CD4-positive, alpha-beta T cell (primary cell): ENCODE measurements at regions of chr1 and their contacts with region 1.

Region 1: DNA sequence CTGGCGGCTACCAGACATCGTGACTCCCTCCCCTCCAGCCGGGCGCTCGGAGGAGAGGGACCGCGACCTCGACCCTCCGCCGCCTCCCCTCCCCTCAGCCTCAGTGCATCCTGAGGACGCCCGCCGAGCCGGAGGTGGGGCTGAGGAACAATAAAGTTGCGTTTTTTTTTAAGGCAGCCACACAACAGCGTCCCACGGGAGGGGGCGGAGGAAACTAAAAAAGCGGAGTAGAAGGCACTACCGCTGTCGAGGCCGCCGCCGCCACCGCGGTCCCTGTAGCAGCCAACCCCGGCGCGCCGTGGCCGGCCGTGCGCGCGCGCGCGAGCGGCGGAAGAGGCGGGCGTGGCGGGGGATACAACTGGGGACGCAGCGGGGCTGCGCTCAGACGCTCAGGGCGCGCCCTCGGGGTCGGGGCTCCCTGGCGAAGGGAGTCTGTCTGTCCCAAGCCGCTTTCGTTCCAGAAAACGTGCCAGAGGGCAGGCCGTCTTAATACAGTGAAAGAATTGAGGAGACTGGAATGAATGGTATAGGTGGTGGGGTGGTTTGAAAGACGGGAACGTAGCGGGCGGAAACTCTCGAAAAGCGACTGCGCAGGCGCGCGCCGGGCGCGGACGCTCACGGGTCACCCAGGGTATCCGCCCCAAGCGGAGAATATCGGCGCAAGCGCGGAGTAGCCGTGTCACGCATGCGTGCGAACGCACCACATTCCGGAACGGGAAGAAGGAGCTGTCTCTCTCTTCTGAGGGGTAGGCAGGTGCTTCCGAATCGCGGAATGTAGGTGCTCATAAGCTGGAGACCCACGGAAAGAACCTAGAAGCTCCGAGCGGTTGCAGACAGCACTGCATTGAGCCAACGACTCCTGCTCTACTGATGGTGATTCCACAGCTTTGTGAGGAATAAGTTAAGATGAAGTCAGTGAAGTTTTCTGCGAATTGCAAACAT is at the start of gene COP1:
- DNase-seq: peak; percentile 94 to 99 (median 96)
- ATAC-seq: peak; percentile 77
- H3K4me3 ChIP-seq: peak within 1 kb of the TSS; percentile 98
- H3K4me3 Mint-ChIP-seq: peak within 1 kb of the TSS; percentile 100
- H3K27ac ChIP-seq: peak within 1 kb of the TSS; percentile 87 to 95
- H3K27ac Mint-ChIP-seq: peak within 1 kb of the TSS; percentile 99
- H3K4me1 ChIP-seq: peaks cover 19% of the 10 kb centered on the region
- H3K4me1 Mint-ChIP-seq: peaks cover 45% of the 10 kb centered on the region
- H3K27me3 ChIP-seq: no peaks in the 10 kb centered on the region
- H3K27me3 Mint-ChIP-seq: peaks cover 3% of the 10 kb centered on the region
- CTCF ChIP-seq: no peak
- total RNA-seq, gene COP1: 38.6 to 42.2 TPM

Region 2: GRCh38 chr1:175978476-175978875 is 228.8 kb before region 1 on chr1:
- CTCF ChIA-PET with region 1: no interaction called
- POLR2A ChIA-PET with region 1: no interaction called
- intact Hi-C with region 1: no loop called
- DNase-seq: no peak
- ATAC-seq: no peak
- H3K4me3 ChIP-seq: no peak overlapping the region
- H3K4me3 Mint-ChIP-seq: no peak overlapping the region
- H3K27ac ChIP-seq: no peak overlapping the region
- H3K27ac Mint-ChIP-seq: no peak overlapping the region
- H3K4me1 ChIP-seq: no peaks in the 10 kb centered on the region
- H3K4me1 Mint-ChIP-seq: peaks cover 17% of the 10 kb centered on the region
- H3K27me3 ChIP-seq: no peaks in the 10 kb centered on the region
- H3K27me3 Mint-ChIP-seq: no peaks in the 10 kb centered on the region
- CTCF ChIP-seq: no peak

Region 3: DNA sequence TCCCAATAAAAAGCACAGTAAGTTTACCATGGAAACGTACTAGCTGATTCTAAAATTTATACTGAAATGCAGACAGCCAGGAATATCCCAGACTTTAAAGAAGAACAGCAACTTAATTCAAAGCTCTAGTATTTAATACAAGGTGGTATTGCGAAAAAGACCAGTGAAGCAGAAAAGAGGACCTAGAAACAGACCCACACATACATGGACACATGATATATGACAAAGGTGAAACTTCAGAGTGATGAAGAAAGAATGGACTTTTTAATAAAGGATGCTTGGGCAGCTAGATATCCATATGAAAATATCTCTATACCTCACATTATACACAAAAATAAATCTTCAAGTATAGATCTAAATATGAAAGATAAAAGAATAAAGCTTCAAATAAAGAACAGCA is 62.7 kb before region 1 on chr1:
- CTCF ChIA-PET with region 1: interaction called, 3 read pairs
- POLR2A ChIA-PET with region 1: no interaction called
- intact Hi-C with region 1: loop called in 1 of 2 experiments (anchors 5 kb)
- DNase-seq: no peak
- ATAC-seq: no peak
- H3K4me3 ChIP-seq: no peak overlapping the region
- H3K4me3 Mint-ChIP-seq: no peak overlapping the region
- H3K27ac ChIP-seq: no peak overlapping the region
- H3K27ac Mint-ChIP-seq: no peak overlapping the region
- H3K4me1 ChIP-seq: no peaks in the 10 kb centered on the region
- H3K4me1 Mint-ChIP-seq: peaks cover 46% of the 10 kb centered on the region
- H3K27me3 ChIP-seq: no peaks in the 10 kb centered on the region
- H3K27me3 Mint-ChIP-seq: no peaks in the 10 kb centered on the region
- CTCF ChIP-seq: no peak

Region 4: GRCh38 chr1:176159993-176160392 is 47.2 kb before region 1 on chr1:
- CTCF ChIA-PET with region 1: no interaction called
- POLR2A ChIA-PET with region 1: no interaction called
- intact Hi-C with region 1: loop called in 1 of 2 experiments (anchors 5 kb)
- DNase-seq: peak in 1 of 14 experiments; percentile 16
- ATAC-seq: no peak
- H3K4me3 ChIP-seq: no peak overlapping the region
- H3K4me3 Mint-ChIP-seq: no peak overlapping the region
- H3K27ac ChIP-seq: no peak overlapping the region
- H3K27ac Mint-ChIP-seq: peak overlapping the region; percentile 13
- H3K4me1 ChIP-seq: no peaks in the 10 kb centered on the region
- H3K4me1 Mint-ChIP-seq: peaks cover 47% of the 10 kb centered on the region
- H3K27me3 ChIP-seq: no peaks in the 10 kb centered on the region
- H3K27me3 Mint-ChIP-seq: no peaks in the 10 kb centered on the region
- CTCF ChIP-seq: no peak